ENCODE measurements at regions of chr12 and their contacts with region 1.

Region 1: DNA sequence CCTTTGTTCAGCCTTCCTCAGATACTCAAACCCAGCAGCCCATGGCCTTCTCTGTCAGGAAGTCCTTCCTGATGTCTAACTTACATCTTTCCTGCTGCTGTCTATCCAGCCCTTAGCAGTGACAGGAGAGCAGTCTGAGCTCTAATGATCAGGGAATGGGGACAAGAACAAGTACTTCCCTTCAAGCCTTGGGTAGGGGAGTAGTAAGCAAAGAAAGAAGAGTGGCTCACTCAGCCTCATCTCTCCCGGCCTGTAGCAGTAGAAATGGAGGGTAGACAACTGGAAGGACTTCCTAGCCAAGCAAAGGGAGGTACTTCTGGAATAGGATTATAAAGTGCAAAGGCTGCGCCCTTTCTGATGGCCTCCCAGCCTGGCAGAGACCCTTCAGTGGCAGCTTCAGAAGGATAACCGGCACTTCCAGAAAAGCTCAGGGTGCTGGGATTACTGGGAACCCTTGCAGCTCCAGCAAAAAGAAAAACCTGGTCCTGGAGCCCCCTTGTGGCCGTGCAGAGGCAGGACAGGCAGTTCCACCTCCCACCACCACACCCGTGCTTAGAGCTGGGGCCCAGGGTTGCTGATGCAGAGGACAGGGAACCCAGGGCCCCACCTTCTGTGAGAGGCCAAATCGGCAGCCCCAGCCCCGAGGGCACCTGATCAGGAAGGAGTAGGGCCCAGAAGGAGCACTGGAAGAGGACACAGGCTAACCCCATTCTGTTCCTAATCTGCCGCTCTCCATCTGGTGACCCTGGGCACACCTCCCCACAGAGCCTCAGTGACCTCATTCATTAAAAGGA is 12.4 kb upstream of the SMUG1 start:
- DNase-seq: peak; percentile 60 to 77 (median 67)
- ATAC-seq: peak; percentile 93
- H3K4me3 ChIP-seq: no peak overlapping the region
- H3K4me1 ChIP-seq: no peaks in the 10 kb centered on the region
- CTCF ChIP-seq: peak; percentile 93

Region 2: DNA sequence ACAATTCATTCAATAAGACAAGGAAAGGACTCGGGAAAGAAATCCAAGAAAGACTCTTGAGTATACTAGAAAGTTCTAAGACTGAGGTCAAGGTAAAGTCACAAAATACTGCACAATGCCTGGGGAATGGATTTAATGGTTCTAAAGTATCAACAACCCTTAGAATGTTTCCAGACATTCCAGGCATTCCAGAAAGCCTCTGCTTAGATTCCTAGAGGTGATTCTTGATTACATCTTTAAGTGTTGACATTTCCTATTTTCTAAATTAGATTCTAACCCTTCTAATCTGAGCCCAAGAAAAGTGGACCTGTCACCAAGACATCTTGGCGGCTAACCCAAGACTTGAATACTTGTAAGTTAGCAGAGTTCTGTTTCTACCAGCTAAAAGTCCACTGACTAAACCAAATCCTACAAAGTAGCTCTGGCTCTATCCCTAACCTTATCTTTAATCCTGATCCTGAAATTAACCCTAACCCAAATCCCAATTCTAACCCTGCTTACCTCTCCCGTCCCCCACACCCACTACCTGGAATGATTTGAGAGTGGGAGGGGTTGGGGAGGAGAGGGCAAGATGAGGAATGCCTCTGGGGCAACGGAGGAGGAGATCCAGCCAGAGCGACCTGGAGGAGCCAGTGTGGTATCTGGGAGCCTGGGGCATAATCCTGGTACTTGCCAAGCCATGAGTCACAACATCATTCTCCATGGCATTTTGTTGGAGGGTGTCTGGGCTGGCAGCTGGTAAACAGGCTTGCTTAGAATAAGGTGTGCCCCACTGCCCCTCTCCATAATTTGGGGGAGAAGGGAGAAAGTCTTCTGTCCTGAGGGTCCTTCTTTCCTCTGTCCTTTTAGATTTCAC is 356.0 kb before region 1 on chr12:
- intact Hi-C with region 1: no loop called
- DNase-seq: no peak
- ATAC-seq: no peak
- H3K4me3 ChIP-seq: no peak overlapping the region
- H3K4me1 ChIP-seq: no peaks in the 10 kb centered on the region
- CTCF ChIP-seq: no peak

Region 3: GRCh38 chr12:54005853-54006686 is 195.1 kb before region 1 on chr12:
- intact Hi-C with region 1: loop called in 1 of 2 experiments (anchors 5 kb)
- DNase-seq: peak; percentile 82 to 91 (median 89)
- ATAC-seq: peak; percentile 93
- H3K4me3 ChIP-seq: no peak overlapping the region
- H3K4me1 ChIP-seq: peaks cover 5% of the 10 kb centered on the region
- CTCF ChIP-seq: peak; percentile 73

Region 4: DNA sequence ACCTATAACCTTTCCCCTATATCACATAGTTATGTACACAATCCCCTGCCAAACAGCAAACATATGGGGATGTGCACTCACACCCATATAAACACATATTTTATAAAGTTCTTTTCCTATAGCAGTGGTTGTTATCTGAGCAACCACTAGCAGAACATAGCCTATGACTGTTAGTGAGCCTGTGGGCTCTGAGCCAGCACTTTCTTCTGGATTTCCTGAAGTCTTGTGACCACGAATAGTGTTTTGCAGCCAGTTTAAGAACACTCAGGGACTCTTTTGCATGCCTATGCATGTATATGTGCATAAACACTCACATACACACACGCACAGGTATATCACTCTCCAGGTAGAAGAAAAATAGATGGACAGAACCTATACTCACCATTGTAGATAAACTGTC is 766.3 kb after region 1 on chr12:
- intact Hi-C with region 1: no loop called
- DNase-seq: peak in 1 of 3 donors; percentile 17
- ATAC-seq: peak; percentile 26
- H3K4me3 ChIP-seq: no peak overlapping the region
- H3K4me1 ChIP-seq: no peaks in the 10 kb centered on the region
- CTCF ChIP-seq: no peak

Measured in mucosa of descending colon (tissue), 3 donors.